WTC11 (cell line): ENCODE measurements at regions of chr20 and their contacts with region 1.

Region 1: DNA sequence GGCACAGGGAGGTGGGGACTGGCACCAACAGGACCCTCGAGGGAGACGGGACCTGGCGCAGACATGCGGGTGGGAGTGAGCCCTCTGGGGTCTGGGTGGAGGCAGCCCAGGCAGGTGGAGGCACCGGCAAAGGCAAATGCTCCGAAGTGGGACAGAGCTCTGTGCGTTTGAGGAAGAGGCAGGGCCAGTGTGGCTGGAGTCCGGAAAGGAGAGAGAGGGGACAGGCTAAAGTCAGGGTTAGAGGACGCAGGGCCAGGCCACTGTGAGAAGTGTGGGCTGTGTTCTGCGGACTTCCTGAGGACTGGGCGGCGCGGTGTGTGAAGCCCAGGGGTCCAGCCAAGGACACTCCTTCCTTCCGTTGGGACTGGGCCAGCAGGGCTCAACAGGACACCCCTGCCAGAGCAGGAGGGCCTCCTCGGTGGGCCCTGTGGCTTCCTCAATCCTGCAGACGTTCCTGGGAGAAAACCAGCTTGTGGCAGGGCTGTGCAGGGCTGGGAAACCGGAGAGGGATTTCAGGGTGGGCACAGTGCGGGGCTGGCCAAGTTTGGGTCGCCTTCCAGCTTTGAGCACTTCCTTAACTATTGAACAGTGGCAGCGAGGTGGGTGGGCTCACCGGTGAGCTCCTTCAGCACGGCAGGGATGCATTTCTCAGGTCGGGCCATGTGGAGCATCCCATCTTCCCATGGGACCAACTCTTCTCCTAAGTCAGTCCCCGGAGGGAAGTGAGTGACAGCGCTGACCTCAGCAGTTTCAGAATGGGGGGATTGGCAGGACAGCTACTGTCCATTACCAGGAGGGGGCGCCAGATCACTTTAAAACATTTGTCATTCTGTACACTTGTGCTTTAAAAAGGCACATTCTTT is 22.5 kb downstream of the MOCS3 start:
- DNase-seq: peak; percentile 74
- ATAC-seq: peak; percentile 75
- H3K4me3 Mint-ChIP-seq: 0 out of 2 replicates have a peak overlapping the region, but pooled peaks have one; percentile 29
- H3K27ac Mint-ChIP-seq: no peak overlapping the region
- H3K4me1 Mint-ChIP-seq: peaks cover 3% of the 10 kb centered on the region
- H3K27me3 Mint-ChIP-seq: peaks cover 5% of the 10 kb centered on the region; the same call in 1 of the 2 replicates
- CTCF ChIP-seq: peak; percentile 82

Region 2: DNA sequence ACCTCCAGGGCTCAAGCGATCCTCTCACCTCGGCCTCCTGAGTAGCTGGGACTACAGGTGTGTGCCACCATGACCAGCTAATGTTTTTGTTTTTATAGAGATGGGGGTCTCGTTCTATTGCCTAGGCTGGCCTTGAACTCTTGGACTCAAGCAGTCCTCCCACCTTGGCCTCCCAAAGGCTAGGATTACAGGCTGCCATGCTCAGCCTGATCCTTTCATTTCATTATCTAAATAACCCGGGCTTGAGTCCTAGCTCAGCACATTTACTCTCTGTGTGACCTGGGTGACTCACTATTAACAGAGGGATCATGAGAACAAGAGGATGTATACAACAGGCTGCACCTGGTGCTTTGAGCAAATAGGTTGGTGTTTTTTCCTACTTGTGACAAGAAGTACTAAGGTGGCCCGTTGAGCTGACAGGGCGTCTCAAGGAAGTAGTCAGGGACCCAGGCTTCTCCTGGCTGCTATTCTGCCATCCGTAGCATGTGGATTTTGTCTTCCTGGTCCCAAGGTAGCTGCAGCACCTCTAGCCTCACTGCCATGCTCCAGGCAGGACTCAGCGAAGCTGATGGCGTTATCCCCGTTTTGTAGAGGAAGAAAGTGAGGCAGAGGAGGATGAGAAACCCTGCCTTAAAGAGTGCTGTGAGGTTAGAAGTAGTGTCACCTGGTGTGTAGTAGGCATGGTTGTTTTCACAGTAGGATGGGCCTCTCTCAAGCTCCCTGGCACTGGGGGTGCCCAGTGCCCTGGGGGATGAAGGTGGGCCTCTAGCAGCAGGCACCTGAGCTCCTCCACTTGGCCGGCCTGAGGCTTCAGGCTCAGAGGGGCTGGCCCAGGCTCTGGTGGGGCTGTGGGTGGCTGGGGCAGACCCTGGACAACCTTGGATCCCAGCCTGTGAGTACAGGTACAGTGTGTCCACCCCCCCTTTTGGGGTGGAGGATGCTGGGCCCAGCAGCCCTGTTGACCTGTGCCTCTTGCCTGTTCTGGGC is 112.3 kb before region 1 on chr20:
- CTCF ChIA-PET with region 1: no interaction called
- POLR2A ChIA-PET with region 1: no interaction called
- DNase-seq: no peak
- ATAC-seq: no peak
- H3K4me3 Mint-ChIP-seq: no peak overlapping the region
- H3K27ac Mint-ChIP-seq: peak overlapping the region; percentile 96
- H3K4me1 Mint-ChIP-seq: peaks cover 47% of the 10 kb centered on the region
- H3K27me3 Mint-ChIP-seq: no peaks in the 10 kb centered on the region
- CTCF ChIP-seq: no peak

Region 3: GRCh38 chr20:50967586-50967985 is 13.5 kb before region 1 on chr20:
- CTCF ChIA-PET with region 1: interaction called, 11 read pairs
- POLR2A ChIA-PET with region 1: no interaction called
- DNase-seq: no peak
- ATAC-seq: no peak
- H3K4me3 Mint-ChIP-seq: no peak overlapping the region
- H3K27ac Mint-ChIP-seq: no peak overlapping the region
- H3K4me1 Mint-ChIP-seq: peaks cover 11% of the 10 kb centered on the region; the same call in 1 of the 2 replicates
- H3K27me3 Mint-ChIP-seq: 0 out of 2 replicates have a peak, but pooled peaks cover 3% of the 10 kb centered on the region
- CTCF ChIP-seq: no peak

Region 4: DNA sequence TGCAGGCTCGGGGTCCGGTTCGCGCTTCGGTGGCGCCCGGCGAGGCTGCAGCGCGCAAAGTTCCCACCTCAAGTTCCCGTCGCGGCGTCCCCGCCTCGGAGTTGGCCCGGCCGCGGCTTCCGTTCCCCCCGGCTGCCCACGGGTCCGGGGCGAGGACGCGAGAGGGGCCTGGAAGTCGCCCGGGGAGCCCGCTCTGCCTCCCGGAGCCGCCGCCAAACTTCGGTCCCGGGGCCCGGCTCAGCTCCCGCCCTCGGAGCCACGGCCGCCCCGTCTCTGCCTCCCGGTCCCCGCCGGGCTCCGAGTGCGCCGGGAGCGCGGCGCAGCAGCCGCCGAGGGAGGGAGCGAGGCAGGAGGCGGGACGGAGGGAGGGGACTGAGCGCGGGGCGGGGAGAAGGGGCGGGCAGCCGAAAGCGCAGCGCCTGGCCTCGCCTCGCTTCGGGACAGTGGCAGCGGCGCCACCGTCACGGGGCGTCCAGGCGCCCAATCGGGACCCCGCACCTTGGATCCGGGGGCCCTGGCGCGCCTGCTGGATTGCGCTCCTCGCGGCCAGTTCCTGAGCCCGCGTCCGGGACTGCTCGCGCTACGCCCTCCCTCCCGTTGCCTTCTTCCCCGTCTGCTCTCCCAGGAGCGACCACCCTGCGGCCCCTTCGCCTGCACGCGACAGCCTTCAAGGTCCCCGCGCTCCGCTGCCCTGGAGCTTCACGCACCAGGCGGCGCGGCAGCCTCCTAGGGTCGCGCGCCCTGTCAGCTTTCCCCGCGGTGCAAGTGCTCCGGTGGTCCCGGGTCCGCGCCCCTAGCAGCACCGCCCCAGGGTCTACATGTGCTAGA is 41.9 kb after region 1 on chr20 and contains the start of gene KCNG1:
- CTCF ChIA-PET with region 1: interaction called, 10 read pairs
- POLR2A ChIA-PET with region 1: no interaction called
- DNase-seq: peak; percentile 79
- ATAC-seq: peak; percentile 82
- H3K4me3 Mint-ChIP-seq: peak within 1 kb of the TSS; percentile 72
- H3K27ac Mint-ChIP-seq: no peak within 1 kb of the TSS
- H3K4me1 Mint-ChIP-seq: peaks cover 36% of the 10 kb centered on the region
- H3K27me3 Mint-ChIP-seq: peaks cover 49% of the 10 kb centered on the region
- CTCF ChIP-seq: no peak
- total RNA-seq, gene KCNG1: 31.2 to 34.6 TPM (median 31.6 TPM) in 3 replicates

Region 5: DNA sequence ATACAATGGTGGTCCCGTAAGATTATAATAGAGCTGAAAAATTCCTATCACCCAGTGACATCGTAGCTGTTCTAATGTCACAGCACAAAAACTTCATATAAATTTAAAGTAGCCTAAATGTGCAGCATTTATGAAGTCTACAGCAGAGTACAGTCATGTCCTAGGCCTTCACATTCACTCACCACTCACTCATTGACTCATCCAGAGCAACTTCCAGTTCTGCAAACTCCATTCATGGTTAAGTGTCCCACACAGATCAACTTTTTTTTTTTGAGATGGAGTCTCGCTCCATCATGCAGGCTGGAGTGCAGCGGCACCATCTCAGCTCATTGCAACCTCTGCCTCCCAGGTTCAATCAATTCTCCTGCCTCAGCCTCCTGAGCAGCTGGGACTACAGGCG is 62.7 kb after region 1 on chr20:
- CTCF ChIA-PET with region 1: no interaction called
- POLR2A ChIA-PET with region 1: no interaction called
- DNase-seq: no peak
- ATAC-seq: no peak
- H3K4me3 Mint-ChIP-seq: no peak overlapping the region
- H3K27ac Mint-ChIP-seq: no peak overlapping the region
- H3K4me1 Mint-ChIP-seq: no peaks in the 10 kb centered on the region
- H3K27me3 Mint-ChIP-seq: no peaks in the 10 kb centered on the region; the same call in 1 of the 2 replicates
- CTCF ChIP-seq: no peak

Region 6: GRCh38 chr20:51104960-51105920 is 124.2 kb after region 1 on chr20:
- CTCF ChIA-PET with region 1: no interaction called
- POLR2A ChIA-PET with region 1: no interaction called
- DNase-seq: no peak
- ATAC-seq: no peak
- H3K4me3 Mint-ChIP-seq: no peak overlapping the region
- H3K27ac Mint-ChIP-seq: peak overlapping the region; percentile 64; the same call in 1 of the 2 replicates
- H3K4me1 Mint-ChIP-seq: peaks cover 4% of the 10 kb centered on the region
- H3K27me3 Mint-ChIP-seq: no peaks in the 10 kb centered on the region; the same call in 1 of the 2 replicates
- CTCF ChIP-seq: no peak

Region 7: GRCh38 chr20:51318058-51318895 is 337.2 kb after region 1 on chr20:
- CTCF ChIA-PET with region 1: interaction called, 14 read pairs
- POLR2A ChIA-PET with region 1: interaction called, 4 read pairs
- DNase-seq: peak; percentile 92
- ATAC-seq: peak; percentile 95
- H3K4me3 Mint-ChIP-seq: no peak overlapping the region
- H3K27ac Mint-ChIP-seq: peak overlapping the region; percentile 47; the same call in 1 of the 2 replicates
- H3K4me1 Mint-ChIP-seq: peaks cover 38% of the 10 kb centered on the region
- H3K27me3 Mint-ChIP-seq: peaks cover 24% of the 10 kb centered on the region
- CTCF ChIP-seq: peak; percentile 96

Region 8: DNA sequence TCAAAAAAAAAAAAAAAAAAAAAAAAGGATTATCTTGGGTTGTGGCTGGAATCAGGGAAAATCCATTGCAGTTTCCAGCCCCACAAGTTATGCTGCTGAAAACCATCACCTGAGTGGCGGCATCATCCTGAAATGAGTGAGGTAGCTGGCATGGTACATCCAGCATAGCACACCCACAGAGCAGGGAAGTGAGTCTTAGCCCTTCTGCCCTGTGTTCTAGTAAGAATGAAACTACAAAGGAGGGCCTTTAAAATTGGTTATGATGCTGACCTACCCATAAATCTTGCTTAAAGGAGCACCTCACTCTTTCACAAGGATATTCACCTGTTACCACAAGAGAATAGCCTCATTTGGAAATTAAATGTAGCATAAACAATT is 442.2 kb after region 1 on chr20:
- CTCF ChIA-PET with region 1: interaction called, 10 read pairs
- POLR2A ChIA-PET with region 1: no interaction called
- DNase-seq: no peak
- ATAC-seq: no peak
- H3K4me3 Mint-ChIP-seq: no peak overlapping the region
- H3K27ac Mint-ChIP-seq: peak overlapping the region; percentile 82
- H3K4me1 Mint-ChIP-seq: peaks cover 42% of the 10 kb centered on the region
- H3K27me3 Mint-ChIP-seq: no peaks in the 10 kb centered on the region
- CTCF ChIP-seq: no peak